ENCODE measurements at regions of chr16 and their contacts with region 1.

Region 1: GRCh38 chr16:24125214-24125613 is 130.9 kb upstream of the CACNG3 start:
- DNase-seq: no peak
- H3K4me3 ChIP-seq: no peak overlapping the region
- H3K27ac ChIP-seq: no peak overlapping the region
- H3K4me1 ChIP-seq: no peaks in the 10 kb centered on the region
- H3K27me3 ChIP-seq: no peaks in the 10 kb centered on the region
- CTCF ChIP-seq: no peak

Region 2: DNA sequence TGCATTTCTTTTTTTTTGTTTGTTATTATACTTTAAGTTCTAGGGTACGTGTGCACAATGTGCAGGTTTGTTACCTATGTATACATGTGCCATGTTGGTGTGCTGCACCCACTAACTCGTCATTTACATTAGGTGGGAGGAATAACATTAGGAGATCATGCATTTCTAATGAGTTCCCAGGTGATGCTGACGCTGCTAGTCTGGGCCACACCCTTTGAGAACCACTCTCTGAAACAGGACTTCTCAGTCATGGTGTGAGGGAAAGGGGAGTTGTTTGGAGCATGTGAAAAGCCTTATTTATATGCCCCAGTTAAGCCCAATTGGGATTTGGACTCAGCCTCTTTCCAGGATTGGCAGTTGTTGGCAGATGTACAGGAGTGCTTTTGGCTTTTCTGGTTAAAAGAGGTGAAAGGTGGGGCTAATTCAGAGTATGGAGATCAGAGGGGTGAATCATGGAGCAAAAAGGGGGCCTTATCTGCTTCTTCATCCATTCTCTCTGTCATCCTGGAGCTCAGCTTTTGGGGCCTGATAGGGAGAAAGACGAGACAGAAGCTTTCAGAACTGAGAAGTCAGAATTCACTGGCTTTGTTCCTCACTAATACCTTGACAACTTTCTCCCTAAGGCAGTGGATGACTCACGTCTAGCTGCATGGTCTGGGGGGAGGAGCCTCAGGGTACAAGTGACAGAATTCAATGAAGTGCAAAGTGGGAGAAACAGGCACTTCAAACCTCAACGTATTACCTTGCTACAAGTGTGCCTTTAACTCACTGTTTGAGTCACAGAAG is 49.1 kb before region 1 on chr16:
- CTCF ChIA-PET with region 1: no interaction called
- dilution Hi-C with region 1: loop called (anchors 5 kb)
- in situ Hi-C with region 1: no loop called
- intact Hi-C with region 1: no loop called
- DNase-seq: peak; percentile 16
- H3K4me3 ChIP-seq: no peak overlapping the region
- H3K27ac ChIP-seq: no peak overlapping the region
- H3K4me1 ChIP-seq: no peaks in the 10 kb centered on the region
- H3K27me3 ChIP-seq: no peaks in the 10 kb centered on the region
- CTCF ChIP-seq: no peak

Region 3: GRCh38 chr16:24221219-24221618 is 96.0 kb after region 1 on chr16:
- CTCF ChIA-PET with region 1: no interaction called
- dilution Hi-C with region 1: no loop called
- in situ Hi-C with region 1: no loop called
- intact Hi-C with region 1: no loop called
- DNase-seq: no peak
- H3K4me3 ChIP-seq: no peak overlapping the region
- H3K27ac ChIP-seq: no peak overlapping the region
- H3K4me1 ChIP-seq: no peaks in the 10 kb centered on the region
- H3K27me3 ChIP-seq: no peaks in the 10 kb centered on the region
- CTCF ChIP-seq: no peak

Region 4: DNA sequence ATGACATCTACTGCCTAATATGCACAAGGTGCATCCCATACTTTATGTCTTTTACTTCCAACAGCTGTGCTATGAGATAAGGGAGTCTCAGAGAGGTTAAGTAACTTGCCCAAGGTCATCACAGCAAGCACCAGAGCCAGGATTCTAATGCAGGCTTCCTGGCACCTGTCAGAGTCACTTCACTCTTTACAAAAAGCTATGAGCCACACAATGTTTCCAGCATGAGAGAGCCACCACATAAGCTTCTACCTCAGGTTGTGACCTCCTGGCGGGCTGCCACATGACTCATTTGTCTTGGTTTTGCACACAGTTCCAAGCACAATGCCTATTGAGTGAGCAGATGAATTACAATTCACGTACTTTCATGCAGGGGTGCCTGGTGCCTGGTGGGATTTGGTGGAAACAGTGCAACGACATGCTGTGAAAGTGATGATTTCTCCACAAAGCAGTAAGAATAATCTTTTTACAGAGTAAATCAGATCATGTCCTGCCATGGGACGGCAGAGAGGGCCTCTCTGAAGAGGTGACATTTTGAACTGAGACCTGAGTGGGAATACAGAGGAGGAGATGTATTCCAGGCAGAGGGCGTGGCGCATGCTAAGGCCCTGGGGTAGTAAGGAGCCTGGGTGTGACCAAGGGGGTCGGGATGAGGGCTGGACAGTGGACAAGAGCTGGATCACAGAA is 184.2 kb after region 1 on chr16:
- CTCF ChIA-PET with region 1: no interaction called
- dilution Hi-C with region 1: no loop called
- in situ Hi-C with region 1: no loop called
- intact Hi-C with region 1: no loop called
- DNase-seq: peak; percentile 44
- H3K4me3 ChIP-seq: no peak overlapping the region
- H3K27ac ChIP-seq: no peak overlapping the region
- H3K4me1 ChIP-seq: no peaks in the 10 kb centered on the region
- H3K27me3 ChIP-seq: no peaks in the 10 kb centered on the region
- CTCF ChIP-seq: no peak